Activated naive CD4-positive, alpha-beta T cell treated with anti-CD3 and anti-CD28 coated beads for 36 hours (primary cell): ENCODE measurements at regions of chr22 and their contacts with region 1.

Region 1: GRCh38 chr22:40479126-40479800 is 108.9 kb downstream of the SGSM3 start:
- DNase-seq: no peak
- H3K4me3 Mint-ChIP-seq: no peak overlapping the region
- H3K27ac Mint-ChIP-seq: no peak overlapping the region
- H3K4me1 Mint-ChIP-seq: peaks cover 23% of the 10 kb centered on the region
- H3K27me3 Mint-ChIP-seq: no peaks in the 10 kb centered on the region

Region 2: GRCh38 chr22:40374567-40374966 is 104.7 kb before region 1 on chr22:
- CTCF ChIA-PET with region 1: interaction called, 5 read pairs
- intact Hi-C with region 1: loop called (anchors 5 kb)
- DNase-seq: no peak
- H3K4me3 Mint-ChIP-seq: no peak overlapping the region
- H3K27ac Mint-ChIP-seq: no peak overlapping the region
- H3K4me1 Mint-ChIP-seq: peaks cover 40% of the 10 kb centered on the region
- H3K27me3 Mint-ChIP-seq: no peaks in the 10 kb centered on the region

Region 3: DNA sequence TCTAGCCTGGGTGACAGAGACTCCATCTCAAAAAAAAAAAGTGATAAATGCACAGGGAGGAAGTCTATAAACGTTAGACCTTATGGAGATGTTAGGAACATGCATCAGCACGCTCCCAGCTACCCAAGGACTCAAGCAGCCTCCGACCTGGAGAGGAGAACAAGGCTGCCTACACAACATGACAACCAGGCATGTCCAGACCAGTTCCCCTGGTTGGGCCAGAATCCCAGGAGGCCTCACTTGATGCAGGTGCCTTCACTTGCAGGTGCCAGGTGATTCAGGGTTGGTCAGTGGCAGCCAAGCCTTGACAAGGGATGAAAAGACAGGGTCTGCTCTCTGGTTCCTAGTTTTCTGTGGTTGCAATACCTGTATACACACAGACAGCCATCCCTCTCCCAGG is 800.8 kb after region 1 on chr22:
- CTCF ChIA-PET with region 1: no interaction called
- intact Hi-C with region 1: no loop called
- DNase-seq: no peak
- H3K4me3 Mint-ChIP-seq: no peak overlapping the region
- H3K27ac Mint-ChIP-seq: peak overlapping the region; percentile 56
- H3K4me1 Mint-ChIP-seq: peaks cover 26% of the 10 kb centered on the region
- H3K27me3 Mint-ChIP-seq: no peaks in the 10 kb centered on the region